ENCODE measurements at regions of chr3 and their contacts with region 1.

Region 1: DNA sequence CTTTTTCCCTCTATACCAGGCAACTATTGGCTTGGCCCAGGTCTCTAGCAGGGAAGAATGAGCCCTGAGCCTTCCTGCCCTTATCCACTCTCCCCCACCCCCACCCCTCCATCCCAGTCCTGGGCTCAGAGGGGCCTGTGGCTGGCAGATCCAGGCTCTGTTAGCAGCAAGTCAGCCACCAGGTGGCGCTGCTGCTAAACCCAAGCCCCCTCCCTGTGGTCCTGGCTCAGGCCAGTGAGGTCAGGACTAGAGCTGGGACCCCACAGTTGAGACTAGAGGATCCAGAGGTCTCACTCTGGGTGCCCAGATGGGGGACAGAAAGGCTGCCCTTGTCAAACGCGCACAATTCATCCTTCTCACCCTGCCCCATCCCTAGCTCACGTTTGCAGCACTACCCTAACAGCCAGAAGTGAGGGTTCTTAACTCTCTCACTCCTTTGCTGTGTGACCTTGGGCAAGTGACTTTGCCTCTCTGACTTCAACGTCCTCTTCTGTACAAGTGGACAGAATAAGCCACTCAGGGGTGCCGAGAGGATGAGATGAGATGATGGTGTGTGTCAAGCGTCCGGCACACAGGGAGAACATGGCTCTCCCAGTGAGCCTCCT is 46.8 kb upstream of the SLC6A1 start:
- DNase-seq: peak; percentile 52 to 92 (median 82)

Region 2: GRCh38 chr3:10635446-10636076 is 310.2 kb before region 1 on chr3:
- intact Hi-C with region 1: no loop called
- DNase-seq: peak in 1 of 42 donors; percentile 29

Region 3: GRCh38 chr3:10753964-10754363 is 191.8 kb before region 1 on chr3:
- intact Hi-C with region 1: loop called (anchors 5 kb)
- DNase-seq: peak in 7 of 42 donors; percentile 22 to 63 (median 43)

Region 4: GRCh38 chr3:10817506-10817905 is 128.3 kb before region 1 on chr3:
- intact Hi-C with region 1: no loop called
- DNase-seq: peak in 35 of 42 donors; percentile 4 to 75 (median 40)

Region 5: DNA sequence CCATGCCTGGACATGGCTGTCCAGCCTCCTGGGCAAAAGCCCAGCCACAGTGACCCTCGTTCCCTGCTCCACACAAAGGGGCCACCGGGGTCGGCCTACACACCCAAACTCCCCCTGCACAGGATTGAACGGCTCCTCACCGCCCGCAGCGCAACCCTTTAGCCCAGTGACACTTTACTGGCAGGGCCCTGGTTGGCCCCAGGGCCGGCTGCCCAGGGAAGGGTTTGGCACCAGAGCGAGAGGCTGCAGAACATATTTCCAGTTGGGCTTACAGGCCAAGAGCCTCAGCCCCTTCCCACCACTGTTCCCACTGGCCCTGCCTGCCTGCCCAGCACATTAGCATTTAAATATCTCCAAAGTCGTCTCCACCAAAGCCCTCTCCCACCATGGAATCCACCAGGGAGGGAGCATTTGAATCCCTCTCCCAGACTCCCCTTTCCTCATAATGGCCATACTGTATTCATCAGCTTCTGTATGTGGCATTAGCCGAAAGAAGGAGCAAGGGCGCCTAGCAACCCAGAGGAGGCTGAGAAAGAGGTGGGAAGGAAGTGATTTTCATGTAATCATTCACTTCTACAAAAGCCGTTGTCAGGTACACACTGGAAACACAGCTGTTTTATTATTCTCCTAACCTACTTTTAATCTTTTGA is 44.4 kb before region 1 on chr3:
- intact Hi-C with region 1: no loop called
- DNase-seq: peak in 24 of 42 donors; percentile 4 to 71 (median 35)

Region 6: DNA sequence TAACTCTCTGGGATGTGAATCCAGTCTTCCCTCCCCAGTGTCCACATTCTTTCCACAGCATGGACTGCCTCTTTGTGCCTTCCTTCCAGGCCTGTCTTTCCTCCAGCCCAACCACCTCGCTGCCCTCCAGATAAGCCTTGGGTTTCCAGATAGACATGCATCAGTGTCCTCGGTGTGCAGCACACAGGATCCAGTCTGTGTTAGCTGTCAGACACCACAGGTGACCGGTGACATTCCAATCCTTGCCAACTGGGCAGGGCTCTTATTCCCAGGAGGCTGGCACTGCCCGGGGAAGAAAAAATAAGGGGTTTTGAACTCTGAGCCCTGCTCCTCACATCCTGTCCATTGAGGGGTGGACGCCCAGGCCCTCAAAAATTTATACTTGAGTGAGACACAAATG is 40.8 kb after region 1 on chr3:
- intact Hi-C with region 1: loop called (anchors 5 kb)
- DNase-seq: no peak

Region 7: GRCh38 chr3:11021611-11022011 is 75.8 kb after region 1 on chr3:
- intact Hi-C with region 1: loop called (anchors 10 kb)
- DNase-seq: peak in 41 of 42 donors; percentile 48 to 88 (median 73)

Region 8: GRCh38 chr3:11059090-11059798 is 113.5 kb after region 1 on chr3:
- intact Hi-C with region 1: loop called (anchors 1 kb)
- DNase-seq: peak; percentile 54 to 92 (median 78)

Region 9: GRCh38 chr3:11260460-11260859 is 314.7 kb after region 1 on chr3:
- intact Hi-C with region 1: no loop called
- DNase-seq: no peak